ENCODE measurements at regions of chr14 and their contacts with region 1.

Region 1: DNA sequence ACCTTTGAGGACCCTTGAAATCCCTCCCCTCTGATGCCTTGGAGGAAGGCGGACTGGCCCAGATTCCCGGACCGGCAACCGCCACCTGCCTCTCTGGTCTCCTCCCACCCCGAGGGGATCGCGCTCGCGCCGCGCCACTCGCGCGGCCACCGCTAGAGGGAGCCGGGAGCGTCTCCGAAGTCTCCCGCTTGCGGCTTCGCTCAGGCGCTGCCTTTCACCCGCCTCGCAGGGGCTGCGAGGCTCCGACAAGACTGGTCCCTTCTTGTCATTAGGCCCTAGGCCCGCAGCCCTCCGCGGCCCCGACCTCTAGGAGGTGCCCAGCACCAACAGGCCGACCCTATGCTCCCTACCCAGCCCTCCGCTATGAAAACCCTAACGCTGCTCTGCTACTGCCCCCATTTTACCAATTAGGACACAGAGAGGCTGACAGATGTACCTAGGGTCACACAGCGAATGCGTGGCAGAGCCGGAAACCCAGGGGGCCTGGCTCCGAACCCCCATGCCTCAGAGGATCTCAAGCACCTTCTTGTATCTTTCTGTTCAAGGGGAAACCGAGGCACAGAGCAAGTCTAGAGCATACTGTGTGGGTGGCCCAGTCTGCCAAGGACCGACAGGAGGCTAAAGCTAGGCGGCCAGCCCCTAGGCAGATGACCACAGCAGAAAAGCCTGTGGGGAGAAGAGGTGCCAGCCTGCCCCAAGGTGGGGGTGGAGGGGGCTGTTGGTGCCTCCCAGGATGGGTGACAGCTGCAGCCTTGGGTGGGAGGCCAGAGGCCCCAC is 21.4 kb upstream of the VSX2 start:
- DNase-seq: no peak

Region 2: DNA sequence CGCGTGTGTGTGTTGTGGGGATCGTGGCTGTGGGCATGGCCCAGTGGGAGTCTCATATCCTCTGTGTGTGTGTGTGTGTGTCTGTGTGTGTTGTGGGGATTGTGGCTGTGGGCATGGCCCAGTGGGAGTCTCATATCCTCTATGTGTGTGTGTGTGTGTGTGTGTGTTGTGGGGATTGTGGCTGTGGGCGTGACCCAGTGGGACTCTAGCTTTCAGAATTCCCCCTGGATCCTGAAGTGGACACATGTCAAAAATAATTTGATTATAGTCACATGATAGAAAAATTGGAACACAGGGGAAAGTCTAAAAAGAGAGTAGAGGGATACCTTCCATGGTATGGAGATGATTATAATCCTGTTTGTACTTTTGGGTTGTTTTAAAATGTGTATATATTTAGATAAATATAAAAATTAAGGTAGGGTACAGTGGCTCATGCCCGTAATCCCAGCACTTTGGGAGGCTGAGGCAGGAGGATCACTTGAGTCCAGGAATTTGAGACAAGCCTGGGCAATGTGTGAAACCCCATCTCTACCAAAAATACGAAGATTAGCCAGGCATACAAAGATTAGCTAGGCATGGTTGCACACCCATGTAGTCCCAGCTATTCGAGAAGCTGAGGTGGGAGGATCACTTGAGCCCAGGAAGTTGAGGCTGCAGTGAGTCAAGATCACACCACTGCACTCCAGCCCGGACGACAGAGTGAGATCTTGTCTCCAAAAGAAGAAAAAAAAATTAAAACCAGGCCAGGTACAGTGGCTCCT is 969.6 kb before region 1 on chr14:
- intact Hi-C with region 1: no loop called
- DNase-seq: no peak

Region 3: DNA sequence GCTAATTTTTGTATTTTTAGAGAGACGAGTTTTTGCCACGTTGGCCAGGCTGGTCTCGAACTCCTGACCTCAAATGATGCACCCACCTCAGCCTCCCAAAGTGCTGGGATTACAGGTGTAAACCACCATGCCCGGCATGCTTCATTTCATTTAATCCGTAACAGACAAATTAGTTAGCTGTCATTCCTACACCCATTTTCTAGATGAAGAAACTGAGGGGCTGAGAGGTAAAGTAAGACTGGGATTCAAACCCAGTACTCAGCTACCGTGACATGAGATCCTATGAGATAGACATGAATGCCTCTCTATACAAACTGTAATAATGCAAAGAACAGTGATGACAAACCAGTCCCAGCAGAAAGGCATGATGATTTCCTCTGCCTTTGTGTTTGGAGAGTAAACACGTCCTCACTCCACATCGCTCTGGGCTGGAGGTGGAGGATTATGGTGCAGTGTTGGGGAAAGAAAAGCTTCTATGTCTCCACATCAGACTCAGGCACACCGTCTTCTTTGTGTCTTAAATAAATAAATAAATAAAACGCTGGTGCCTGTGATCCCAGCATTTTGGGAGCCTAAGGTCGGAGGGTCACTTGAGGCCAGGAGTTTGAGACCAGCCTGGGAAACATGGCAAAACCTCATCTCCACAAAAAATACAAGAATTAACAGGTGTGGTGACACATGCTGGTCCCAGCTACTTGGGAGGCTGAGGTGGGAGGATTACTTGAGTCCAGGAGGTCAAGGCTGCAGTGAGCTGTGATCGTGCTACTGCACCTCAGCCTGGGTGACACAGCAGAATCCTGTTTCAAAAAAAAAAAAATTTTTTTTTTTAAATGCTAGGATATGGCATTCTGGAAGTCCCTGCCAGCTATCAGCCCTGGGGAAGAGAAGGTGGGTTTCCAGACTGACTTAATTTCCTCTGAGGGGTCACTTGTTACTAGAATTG is 31.8 kb after region 1 on chr14:
- intact Hi-C with region 1: loop called (anchors 2 kb)
- DNase-seq: no peak